ENCODE measurements at regions of chrX and their contacts with region 1.

Region 1: GRCh38 chrX:131677655-131678628 is 134.1 kb downstream of the OR13H1 start:
- DNase-seq: peak; percentile 6
- H3K4me3 ChIP-seq: no peak overlapping the region
- H3K27ac ChIP-seq: no peak overlapping the region
- H3K4me1 ChIP-seq: no peaks in the 10 kb centered on the region
- H3K27me3 ChIP-seq: no peaks in the 10 kb centered on the region
- CTCF ChIP-seq: peak; percentile 70 to 83

Region 2: DNA sequence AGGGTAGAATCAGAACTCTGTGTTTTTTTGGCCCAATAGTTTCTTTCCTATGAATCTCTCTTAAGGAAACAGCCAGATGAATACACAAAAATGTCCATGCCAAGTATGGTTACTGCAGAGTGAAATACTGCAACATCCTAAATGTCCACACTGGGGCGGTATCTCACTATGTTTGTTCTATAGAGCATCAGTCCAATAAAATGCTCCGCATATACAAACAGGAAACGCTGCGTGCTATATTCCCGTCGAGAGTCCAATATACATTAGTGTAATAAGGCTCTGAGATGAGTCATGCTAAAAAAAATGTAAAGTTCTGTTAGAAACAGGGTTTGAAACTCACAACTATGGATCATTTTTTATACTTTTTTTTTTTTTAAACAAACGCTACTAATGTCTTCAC is 702.0 kb before region 1 on chrX:
- CTCF ChIA-PET with region 1: interaction called, 3 read pairs
- dilution Hi-C with region 1: no loop called
- in situ Hi-C with region 1: no loop called
- intact Hi-C with region 1: loop called (anchors 1 kb)
- DNase-seq: peak; percentile 30
- H3K4me3 ChIP-seq: no peak overlapping the region
- H3K27ac ChIP-seq: no peak overlapping the region
- H3K4me1 ChIP-seq: no peaks in the 10 kb centered on the region
- H3K27me3 ChIP-seq: no peaks in the 10 kb centered on the region
- CTCF ChIP-seq: peak; percentile 66 to 68

Region 3: GRCh38 chrX:130994671-130995070 is 683.3 kb before region 1 on chrX:
- CTCF ChIA-PET with region 1: no interaction called
- dilution Hi-C with region 1: no loop called
- in situ Hi-C with region 1: no loop called
- intact Hi-C with region 1: loop called (anchors 5 kb)
- DNase-seq: no peak
- H3K4me3 ChIP-seq: no peak overlapping the region
- H3K27ac ChIP-seq: no peak overlapping the region
- H3K4me1 ChIP-seq: no peaks in the 10 kb centered on the region
- H3K27me3 ChIP-seq: peaks cover 4% of the 10 kb centered on the region
- CTCF ChIP-seq: peak; percentile 56 to 60

Region 4: GRCh38 chrX:131262737-131263679 is 414.9 kb before region 1 on chrX:
- CTCF ChIA-PET with region 1: no interaction called
- dilution Hi-C with region 1: no loop called
- in situ Hi-C with region 1: no loop called
- intact Hi-C with region 1: loop called (anchors 5 kb)
- DNase-seq: no peak
- H3K4me3 ChIP-seq: no peak overlapping the region
- H3K27ac ChIP-seq: no peak overlapping the region
- H3K4me1 ChIP-seq: no peaks in the 10 kb centered on the region
- H3K27me3 ChIP-seq: no peaks in the 10 kb centered on the region
- CTCF ChIP-seq: peak; percentile 34 to 45

Measured in mammary epithelial cell (primary cell).